ENCODE measurements at regions of chr7 and their contacts with region 1.

Region 1: DNA sequence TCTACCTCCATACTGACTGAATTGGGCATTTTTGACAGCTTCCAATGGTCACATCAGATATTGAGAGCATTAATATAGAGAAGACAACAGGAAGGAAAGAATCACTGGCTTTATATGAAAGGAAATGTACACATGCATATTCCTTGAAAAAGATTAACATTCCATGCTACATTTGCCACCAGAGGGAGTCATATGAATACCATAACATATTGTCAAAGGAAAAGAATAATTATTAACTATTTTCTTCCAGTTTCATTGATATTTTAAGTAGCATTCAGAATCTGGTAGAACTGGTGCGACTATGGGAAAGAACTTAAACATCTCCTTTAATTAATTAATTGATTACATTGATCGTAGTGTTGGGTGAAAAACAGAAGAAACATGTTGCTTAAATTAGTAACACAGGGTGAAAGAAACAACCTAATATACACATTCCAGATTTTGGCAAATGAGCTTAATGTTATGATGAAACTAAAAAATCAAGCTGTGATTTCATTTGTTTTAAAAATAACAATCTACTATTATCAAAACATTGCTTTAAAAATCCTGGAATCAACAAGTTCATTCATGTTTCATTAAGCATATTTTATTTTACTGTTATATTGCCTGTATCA is 71.5 kb downstream of the GPR85 start:
- DNase-seq: no peak

Region 2: GRCh38 chr7:112022128-112022527 is 993.0 kb before region 1 on chr7:
- intact Hi-C with region 1: no loop called
- DNase-seq: no peak

Region 3: GRCh38 chr7:113289140-113289740 is 274.1 kb after region 1 on chr7:
- intact Hi-C with region 1: loop called (anchors 10 kb)
- DNase-seq: no peak

Measured in cardiac septum (tissue), 1 donor.